ENCODE measurements at regions of chr1 and their contacts with region 1.

Region 1: GRCh38 chr1:8170059-8170835 is 144.1 kb upstream of the ERRFI1 start:
- DNase-seq: peak in 1 of 35 experiments; percentile 4
- ATAC-seq: peak in 1 of 4 experiments; percentile 12
- H3K4me3 ChIP-seq: no peak overlapping the region
- H3K4me3 Mint-ChIP-seq: peak overlapping the region in 2 of 3 donors; percentile 46 to 48
- H3K27ac ChIP-seq: peak overlapping the region; percentile 100
- H3K27ac Mint-ChIP-seq: peak overlapping the region; percentile 98 to 99
- H3K4me1 ChIP-seq: peaks cover 6 to 42% of the 10 kb centered on the region in 2 experiments
- H3K4me1 Mint-ChIP-seq: peaks cover 18 to 51% (median 48%) of the 10 kb centered on the region in 3 donors
- H3K27me3 ChIP-seq: no peaks in the 10 kb centered on the region
- H3K27me3 Mint-ChIP-seq: no peaks in the 10 kb centered on the region

Region 2: GRCh38 chr1:8082945-8083344 is 87.3 kb before region 1 on chr1:
- CTCF ChIA-PET with region 1: no interaction called
- POLR2A ChIA-PET with region 1: interaction called in 1 of 2 experiments, 13 read pairs
- DNase-seq: no peak
- ATAC-seq: no peak
- H3K4me3 ChIP-seq: no peak overlapping the region
- H3K4me3 Mint-ChIP-seq: no peak overlapping the region
- H3K27ac ChIP-seq: no peak overlapping the region
- H3K27ac Mint-ChIP-seq: no peak overlapping the region
- H3K4me1 ChIP-seq: no peaks in the 10 kb centered on the region
- H3K4me1 Mint-ChIP-seq: no peaks in the 10 kb centered on the region
- H3K27me3 ChIP-seq: no peaks in the 10 kb centered on the region
- H3K27me3 Mint-ChIP-seq: peaks cover 0 to 2% of the 10 kb centered on the region in 2 donors

Region 3: DNA sequence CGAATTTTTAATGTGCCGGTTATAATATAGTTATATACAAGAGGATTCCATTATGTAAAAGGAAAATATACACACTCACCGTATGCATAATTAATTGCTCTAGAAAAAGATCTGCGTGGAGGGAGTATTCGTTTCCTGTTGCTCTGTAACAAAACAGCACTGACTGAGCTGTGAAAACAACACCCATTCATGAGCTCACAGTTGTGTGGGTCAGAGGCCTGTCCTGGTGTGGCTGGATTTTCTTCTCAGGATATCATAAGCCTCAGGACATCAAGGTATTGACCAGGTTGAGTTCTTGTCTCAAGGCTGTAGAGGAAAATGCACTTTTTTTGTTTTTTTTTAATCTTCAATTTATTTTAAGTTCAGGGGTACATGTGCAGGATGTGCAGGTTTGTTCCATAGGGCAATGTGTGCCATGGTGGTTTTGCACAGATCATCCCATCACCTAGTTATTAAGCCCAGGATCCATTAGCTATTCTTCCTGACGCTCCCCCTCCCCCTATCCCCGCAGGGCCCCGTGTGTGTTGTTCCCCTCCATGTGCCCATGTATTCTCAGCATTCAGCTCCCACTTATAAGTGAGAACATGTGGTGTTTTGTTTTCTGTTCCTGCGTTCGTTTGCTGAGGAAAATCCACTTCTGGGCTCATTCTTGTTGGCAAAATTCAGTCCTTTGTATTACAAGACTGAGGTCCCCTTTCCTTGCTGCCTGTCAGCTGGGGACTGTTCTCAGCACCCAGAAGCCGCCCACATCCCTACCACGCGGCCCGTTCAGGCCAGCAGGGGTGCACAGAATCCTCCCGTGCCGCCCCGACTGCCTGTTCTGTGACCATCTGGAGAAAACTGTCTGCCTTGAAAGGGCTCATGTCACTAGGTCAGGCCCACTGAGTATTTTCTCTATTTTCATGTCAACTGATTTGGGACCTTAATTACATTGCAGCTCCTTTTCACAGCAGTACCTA is 56.7 kb before region 1 on chr1:
- CTCF ChIA-PET with region 1: no interaction called
- POLR2A ChIA-PET with region 1: interaction called, 6 to 11 read pairs
- DNase-seq: peak in 1 of 35 experiments; percentile 19
- ATAC-seq: peak in 2 of 4 experiments; percentile 44 to 71
- H3K4me3 ChIP-seq: no peak overlapping the region
- H3K4me3 Mint-ChIP-seq: peak overlapping the region in 1 of 3 donors; percentile 28
- H3K27ac ChIP-seq: peak overlapping the region; percentile 66
- H3K27ac Mint-ChIP-seq: peak overlapping the region; percentile 49 to 60
- H3K4me1 ChIP-seq: peaks cover 0 to 16% of the 10 kb centered on the region in 2 experiments
- H3K4me1 Mint-ChIP-seq: peaks cover 10 to 19% (median 15%) of the 10 kb centered on the region in 3 donors
- H3K27me3 ChIP-seq: no peaks in the 10 kb centered on the region
- H3K27me3 Mint-ChIP-seq: no peaks in the 10 kb centered on the region

Region 4: GRCh38 chr1:8283058-8283884 is 113.0 kb after region 1 on chr1:
- CTCF ChIA-PET with region 1: no interaction called
- POLR2A ChIA-PET with region 1: no interaction called
- DNase-seq: no peak
- ATAC-seq: no peak
- H3K4me3 ChIP-seq: no peak overlapping the region
- H3K4me3 Mint-ChIP-seq: no peak overlapping the region
- H3K27ac ChIP-seq: no peak overlapping the region
- H3K27ac Mint-ChIP-seq: no peak overlapping the region
- H3K4me1 ChIP-seq: no peaks in the 10 kb centered on the region
- H3K4me1 Mint-ChIP-seq: peaks cover 5 to 8% (median 6%) of the 10 kb centered on the region in 3 donors
- H3K27me3 ChIP-seq: peaks cover 6 to 35% of the 10 kb centered on the region in 2 experiments
- H3K27me3 Mint-ChIP-seq: peaks cover 34 to 40% of the 10 kb centered on the region in 2 donors

Region 5: GRCh38 chr1:8533124-8533523 is 362.9 kb after region 1 on chr1:
- CTCF ChIA-PET with region 1: no interaction called
- POLR2A ChIA-PET with region 1: no interaction called
- DNase-seq: no peak
- ATAC-seq: peak; percentile 69 to 87 (median 82)
- H3K4me3 ChIP-seq: no peak overlapping the region
- H3K4me3 Mint-ChIP-seq: peak overlapping the region; percentile 46 to 71 (median 53)
- H3K27ac ChIP-seq: peak overlapping the region; percentile 30
- H3K27ac Mint-ChIP-seq: peak overlapping the region; percentile 89 to 90
- H3K4me1 ChIP-seq: peaks cover 4 to 8% of the 10 kb centered on the region in 2 experiments
- H3K4me1 Mint-ChIP-seq: peaks cover 20 to 22% (median 21%) of the 10 kb centered on the region in 3 donors
- H3K27me3 ChIP-seq: no peaks in the 10 kb centered on the region
- H3K27me3 Mint-ChIP-seq: no peaks in the 10 kb centered on the region

Measured in T-cell (primary cell).